Left colon (tissue), 2 donors: ENCODE measurements at regions of chr19 and their contacts with region 1.

Region 1: DNA sequence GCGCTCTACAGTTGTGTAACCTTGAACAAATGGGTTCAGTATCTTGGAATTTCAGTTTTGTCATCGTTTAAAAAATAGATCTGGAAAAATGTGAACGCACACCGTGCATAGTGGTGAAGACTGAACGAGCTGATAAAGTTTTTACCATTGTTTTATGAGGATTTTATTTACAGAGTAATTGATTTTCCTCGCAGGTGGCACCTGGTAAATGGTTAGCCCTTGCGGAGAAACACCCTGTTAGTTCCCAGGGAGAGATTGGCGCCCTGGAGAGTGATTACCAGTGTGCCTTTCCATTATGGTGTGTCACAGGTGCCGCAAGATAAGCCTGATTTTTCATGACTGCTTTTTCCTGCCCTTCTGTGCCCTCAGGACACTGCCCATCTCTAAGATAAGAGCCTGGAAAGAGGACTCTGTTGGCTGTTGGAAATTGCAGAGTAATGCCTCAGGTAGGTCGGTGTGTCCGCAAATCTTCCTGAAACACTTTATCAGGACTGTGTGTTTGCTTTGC is 612 bp downstream of the ZNF181 start:
- DNase-seq: peak; percentile 20 to 32
- ATAC-seq: peak; percentile 52

Region 2: GRCh38 chr19:34772697-34773554 is 38.3 kb after region 1 on chr19 and contains the start of gene ZNF599:
- intact Hi-C with region 1: loop called in 1 of 2 experiments (anchors 5 kb)
- DNase-seq: peak; percentile 90 to 94
- ATAC-seq: peak; percentile 100
- total RNA-seq, gene ZNF599: 3.6 to 3.8 TPM